ENCODE measurements at regions of chr1 and their contacts with region 1.

Region 1: DNA sequence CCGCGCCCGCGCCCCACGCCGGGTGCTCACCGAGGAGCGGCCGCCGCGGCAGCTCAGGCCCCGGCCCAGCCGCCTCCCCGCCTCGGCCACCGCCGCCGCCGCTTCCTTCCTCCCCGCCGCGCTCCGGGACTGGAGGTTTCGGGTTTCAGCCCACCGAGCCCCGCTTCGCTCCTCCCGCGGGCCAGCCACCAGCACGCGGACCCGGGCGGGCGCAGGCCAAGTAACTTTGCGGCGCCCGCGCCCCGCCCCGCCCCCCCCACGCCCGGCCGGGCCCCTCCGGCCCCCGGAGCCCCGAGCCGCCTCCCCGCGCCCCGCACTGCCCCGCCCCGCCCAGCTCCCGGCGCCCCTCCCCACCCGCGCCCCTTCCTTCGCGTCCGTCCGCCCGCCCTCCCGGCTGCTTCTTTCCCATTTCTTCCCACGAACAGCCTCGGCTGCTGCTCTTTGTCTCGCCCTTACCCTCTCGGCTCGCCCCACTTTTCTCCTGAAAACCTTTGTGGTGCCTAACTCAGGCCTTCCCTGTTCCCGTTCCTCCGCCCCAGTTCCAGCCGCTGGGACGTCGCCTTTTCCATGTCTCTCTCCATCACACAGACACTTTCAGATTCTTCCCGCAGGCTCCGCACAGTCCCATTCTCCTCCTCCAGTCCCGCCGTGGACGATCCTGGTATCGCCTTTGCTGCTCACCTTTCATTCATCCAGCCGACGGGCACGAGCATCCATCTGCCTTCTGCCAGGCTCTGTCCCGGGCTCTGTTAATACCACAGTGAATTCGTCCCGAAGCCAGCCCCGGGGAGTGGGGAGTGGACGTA is at the start of gene GPR161:
- H3K4me3 Mint-ChIP-seq: peak within 1 kb of the TSS; percentile 83
- H3K27ac Mint-ChIP-seq: peak within 1 kb of the TSS; percentile 68
- H3K4me1 Mint-ChIP-seq: peaks cover 21% of the 10 kb centered on the region
- H3K27me3 Mint-ChIP-seq: peaks cover 45% of the 10 kb centered on the region

Region 2: GRCh38 chr1:168082008-168082876 is 54.7 kb before region 1 on chr1:
- intact Hi-C with region 1: loop called (anchors 5 kb)
- H3K4me3 Mint-ChIP-seq: no peak overlapping the region
- H3K27ac Mint-ChIP-seq: peak overlapping the region; percentile 76
- H3K4me1 Mint-ChIP-seq: peaks cover 29% of the 10 kb centered on the region
- H3K27me3 Mint-ChIP-seq: no peaks in the 10 kb centered on the region

Region 3: GRCh38 chr1:168328731-168329399 is 192.0 kb after region 1 on chr1:
- intact Hi-C with region 1: no loop called
- H3K4me3 Mint-ChIP-seq: no peak overlapping the region
- H3K27ac Mint-ChIP-seq: no peak overlapping the region
- H3K4me1 Mint-ChIP-seq: no peaks in the 10 kb centered on the region
- H3K27me3 Mint-ChIP-seq: no peaks in the 10 kb centered on the region

Region 4: DNA sequence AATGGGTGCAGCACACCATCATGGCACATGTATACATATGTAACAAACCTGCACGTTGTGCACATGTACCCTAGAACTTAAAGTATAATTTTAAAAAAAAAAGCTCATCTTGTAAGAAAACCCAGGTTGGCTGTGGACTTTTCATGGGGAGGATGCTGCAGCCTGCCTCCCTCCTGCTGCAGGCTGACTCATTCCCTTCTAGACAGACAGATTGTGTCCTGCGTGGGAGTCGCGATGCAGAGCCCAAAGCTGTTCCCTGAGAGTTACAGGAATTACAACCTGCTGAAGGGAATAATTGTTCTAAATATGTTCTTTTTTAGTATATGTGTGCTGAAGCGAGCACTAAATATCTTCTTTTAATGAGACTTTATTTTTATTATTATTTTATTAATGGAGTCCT is 237.0 kb after region 1 on chr1:
- intact Hi-C with region 1: no loop called
- H3K4me3 Mint-ChIP-seq: no peak overlapping the region
- H3K27ac Mint-ChIP-seq: no peak overlapping the region
- H3K4me1 Mint-ChIP-seq: no peaks in the 10 kb centered on the region
- H3K27me3 Mint-ChIP-seq: no peaks in the 10 kb centered on the region